ENCODE measurements at regions of chr6 and their contacts with region 1.

Region 1: DNA sequence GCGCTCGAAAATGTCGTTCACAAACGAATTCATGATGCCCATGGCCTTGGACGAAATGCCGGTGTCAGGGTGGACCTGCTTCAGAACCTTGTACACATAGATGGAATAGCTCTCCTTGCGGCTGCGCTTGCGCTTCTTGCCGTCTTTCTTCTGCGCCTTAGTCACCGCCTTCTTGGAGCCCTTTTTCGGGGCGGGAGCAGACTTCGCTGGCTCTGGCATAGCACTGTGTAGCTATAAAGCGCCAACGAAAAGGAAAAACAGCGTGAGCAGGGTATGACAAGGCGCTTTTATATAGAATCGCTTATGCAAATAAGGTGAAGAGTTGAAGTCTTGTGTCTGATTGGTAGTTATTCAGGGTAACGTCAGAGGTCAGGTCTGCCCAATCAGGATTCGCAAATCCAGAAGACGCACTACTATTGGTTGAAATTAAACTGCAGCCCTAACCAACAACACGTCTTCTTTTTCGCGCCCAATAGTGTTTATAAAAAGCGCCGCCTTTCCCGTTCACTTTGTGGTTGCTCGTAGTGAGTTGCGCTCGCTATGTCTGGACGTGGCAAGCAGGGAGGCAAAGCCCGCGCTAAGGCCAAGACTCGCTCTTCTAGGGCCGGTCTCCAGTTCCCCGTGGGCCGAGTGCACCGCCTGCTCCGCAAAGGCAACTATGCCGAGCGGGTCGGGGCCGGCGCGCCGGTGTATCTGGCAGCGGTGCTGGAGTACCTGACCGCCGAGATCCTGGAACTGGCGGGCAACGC is 114.8 kb upstream of the PRSS16 start:
- DNase-seq: peak; percentile 80 to 99 (median 87)
- ATAC-seq: peak; percentile 82
- H3K4me3 ChIP-seq: peak overlapping the region; percentile 76 to 83
- H3K4me3 Mint-ChIP-seq: no peak overlapping the region
- H3K27ac ChIP-seq: peak overlapping the region; percentile 86 to 92
- H3K27ac Mint-ChIP-seq: no peak overlapping the region
- H3K4me1 ChIP-seq: peaks cover 15% of the 10 kb centered on the region
- H3K4me1 Mint-ChIP-seq: peaks cover 21% of the 10 kb centered on the region
- H3K27me3 ChIP-seq: no peaks in the 10 kb centered on the region
- H3K27me3 Mint-ChIP-seq: no peaks in the 10 kb centered on the region
- CTCF ChIP-seq: no peak

Region 2: GRCh38 chr6:26103770-26104456 is 1028.8 kb before region 1 on chr6:
- CTCF ChIA-PET with region 1: no interaction called
- POLR2A ChIA-PET with region 1: interaction called, 3 read pairs
- intact Hi-C with region 1: loop called in 1 of 2 experiments (anchors 2 kb)
- DNase-seq: peak; percentile 84 to 97 (median 89)
- ATAC-seq: peak; percentile 91
- H3K4me3 ChIP-seq: peak overlapping the region; percentile 52 to 58
- H3K4me3 Mint-ChIP-seq: peak overlapping the region; percentile 85
- H3K27ac ChIP-seq: peak overlapping the region; percentile 85 to 92
- H3K27ac Mint-ChIP-seq: peak overlapping the region; percentile 98
- H3K4me1 ChIP-seq: peaks cover 7% of the 10 kb centered on the region
- H3K4me1 Mint-ChIP-seq: peaks cover 17% of the 10 kb centered on the region
- H3K27me3 ChIP-seq: no peaks in the 10 kb centered on the region
- H3K27me3 Mint-ChIP-seq: no peaks in the 10 kb centered on the region
- CTCF ChIP-seq: peak; percentile 67

Region 3: GRCh38 chr6:26234421-26235296 is 898.0 kb before region 1 on chr6:
- CTCF ChIA-PET with region 1: no interaction called
- POLR2A ChIA-PET with region 1: interaction called, 19 read pairs
- intact Hi-C with region 1: no loop called
- DNase-seq: peak; percentile 55 to 88 (median 66)
- ATAC-seq: peak; percentile 63
- H3K4me3 ChIP-seq: peak overlapping the region; percentile 66 to 76
- H3K4me3 Mint-ChIP-seq: peak overlapping the region; percentile 85
- H3K27ac ChIP-seq: peak overlapping the region; percentile 84 to 92
- H3K27ac Mint-ChIP-seq: peak overlapping the region; percentile 93
- H3K4me1 ChIP-seq: peaks cover 14% of the 10 kb centered on the region
- H3K4me1 Mint-ChIP-seq: peaks cover 31% of the 10 kb centered on the region
- H3K27me3 ChIP-seq: no peaks in the 10 kb centered on the region
- H3K27me3 Mint-ChIP-seq: no peaks in the 10 kb centered on the region
- CTCF ChIP-seq: no peak

Region 4: DNA sequence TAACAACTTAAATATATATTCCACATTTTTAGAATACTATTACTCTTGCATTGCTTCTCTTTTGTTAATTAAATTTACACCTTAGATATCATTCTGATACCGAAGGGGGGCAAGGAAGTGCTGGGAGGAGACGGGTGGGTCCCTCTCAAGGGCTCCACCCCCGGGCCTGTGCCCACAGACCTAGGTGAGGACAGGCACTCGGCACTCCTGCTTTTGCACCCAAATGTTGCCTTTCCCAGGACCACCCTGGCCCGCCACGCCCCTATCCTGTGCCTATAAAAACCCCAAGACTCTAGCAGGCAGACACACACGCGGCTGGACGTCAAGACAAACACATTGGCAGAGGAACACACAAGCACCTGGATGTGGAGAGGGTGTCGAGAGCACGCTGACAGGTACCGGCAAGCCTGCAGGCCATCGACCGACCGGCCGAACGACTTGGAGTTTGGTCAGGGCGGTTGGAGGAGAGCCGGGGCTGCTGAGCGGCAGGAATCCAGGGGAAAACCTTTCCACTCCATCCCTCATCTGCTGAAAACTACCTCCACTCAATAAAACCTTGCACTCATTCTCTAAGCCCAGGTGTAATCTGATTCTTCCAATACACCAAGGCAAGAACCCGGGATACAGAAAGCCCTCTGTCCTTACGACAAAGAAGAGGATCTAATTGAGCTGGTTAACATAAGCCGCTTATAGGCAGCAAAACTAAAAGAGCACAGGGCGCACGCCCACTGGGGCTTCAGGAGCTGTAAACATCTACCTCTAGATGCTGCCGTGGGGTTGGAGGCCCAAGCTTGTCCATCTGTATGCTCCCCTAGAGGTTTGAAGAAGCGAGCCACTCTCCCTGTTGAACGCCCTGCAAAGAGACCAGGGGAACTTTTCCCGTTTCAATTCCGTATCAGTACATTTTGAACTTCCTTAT is 82.6 kb before region 1 on chr6:
- CTCF ChIA-PET with region 1: no interaction called
- POLR2A ChIA-PET with region 1: no interaction called
- intact Hi-C with region 1: no loop called
- DNase-seq: no peak
- ATAC-seq: no peak
- H3K4me3 ChIP-seq: no peak overlapping the region
- H3K4me3 Mint-ChIP-seq: no peak overlapping the region
- H3K27ac ChIP-seq: no peak overlapping the region
- H3K27ac Mint-ChIP-seq: no peak overlapping the region
- H3K4me1 ChIP-seq: no peaks in the 10 kb centered on the region
- H3K4me1 Mint-ChIP-seq: no peaks in the 10 kb centered on the region
- H3K27me3 ChIP-seq: no peaks in the 10 kb centered on the region
- H3K27me3 Mint-ChIP-seq: peaks cover 23% of the 10 kb centered on the region
- CTCF ChIP-seq: no peak

Region 5: DNA sequence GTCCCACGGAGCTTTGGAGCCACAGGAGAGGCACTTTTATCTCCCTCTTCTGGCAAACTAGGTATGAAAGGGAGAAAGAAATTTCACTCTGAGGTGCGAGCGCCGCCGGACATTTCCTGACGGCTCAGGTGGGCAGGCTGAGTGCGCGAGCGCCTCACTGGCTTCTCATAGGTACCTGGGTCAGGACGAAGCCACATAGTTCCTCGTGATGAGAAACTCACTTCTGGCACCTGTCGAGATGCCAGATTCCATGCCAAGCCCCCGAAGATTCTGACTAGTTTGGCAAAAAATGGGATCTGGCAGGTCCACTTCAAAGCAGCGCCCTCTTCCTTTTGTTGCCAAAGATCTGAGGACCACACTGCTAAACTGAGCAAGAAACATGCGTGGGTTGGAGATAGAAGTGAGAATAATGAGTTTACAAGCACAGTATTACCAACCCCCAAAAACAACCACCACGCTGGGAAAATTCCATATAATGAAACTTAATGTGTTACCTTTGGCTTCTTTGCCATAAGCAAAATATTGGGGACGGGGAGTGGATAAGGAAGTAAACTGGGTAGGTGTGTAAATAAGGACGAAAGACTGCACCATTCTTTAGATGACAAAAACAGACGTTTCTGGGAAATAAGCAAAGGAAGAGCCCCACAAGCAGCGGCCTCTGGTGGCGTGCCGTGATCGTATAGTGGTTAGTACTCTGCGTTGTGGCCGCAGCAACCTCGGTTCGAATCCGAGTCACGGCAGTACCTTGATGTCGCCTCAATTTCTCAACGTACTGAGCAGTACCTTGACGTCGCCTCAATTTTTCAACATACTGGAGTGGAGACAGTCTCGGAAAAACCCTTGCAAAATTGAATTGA is 25.0 kb after region 1 on chr6:
- CTCF ChIA-PET with region 1: interaction called, 49 read pairs
- POLR2A ChIA-PET with region 1: interaction called, 32 read pairs
- intact Hi-C with region 1: loop called (anchors 1 kb)
- DNase-seq: peak; percentile 72 to 91 (median 86)
- ATAC-seq: peak; percentile 75
- H3K4me3 ChIP-seq: peak overlapping the region; percentile 55 to 60
- H3K4me3 Mint-ChIP-seq: peak overlapping the region; percentile 85
- H3K27ac ChIP-seq: peak overlapping the region; percentile 18 to 23
- H3K27ac Mint-ChIP-seq: peak overlapping the region; percentile 87
- H3K4me1 ChIP-seq: peaks cover 13% of the 10 kb centered on the region
- H3K4me1 Mint-ChIP-seq: peaks cover 38% of the 10 kb centered on the region
- H3K27me3 ChIP-seq: no peaks in the 10 kb centered on the region
- H3K27me3 Mint-ChIP-seq: no peaks in the 10 kb centered on the region
- CTCF ChIP-seq: peak; percentile 48

Region 6: GRCh38 chr6:27479319-27480182 is 346.8 kb after region 1 on chr6:
- CTCF ChIA-PET with region 1: interaction called, 4 read pairs
- POLR2A ChIA-PET with region 1: interaction called, 16 read pairs
- intact Hi-C with region 1: loop called in 1 of 2 experiments (anchors 1 kb)
- DNase-seq: peak; percentile 83 to 97 (median 87)
- ATAC-seq: peak; percentile 69
- H3K4me3 ChIP-seq: peak overlapping the region; percentile 79 to 96
- H3K4me3 Mint-ChIP-seq: no peak overlapping the region
- H3K27ac ChIP-seq: peak overlapping the region; percentile 96 to 99
- H3K27ac Mint-ChIP-seq: no peak overlapping the region
- H3K4me1 ChIP-seq: peaks cover 13% of the 10 kb centered on the region
- H3K4me1 Mint-ChIP-seq: peaks cover 9% of the 10 kb centered on the region
- H3K27me3 ChIP-seq: no peaks in the 10 kb centered on the region
- H3K27me3 Mint-ChIP-seq: no peaks in the 10 kb centered on the region
- CTCF ChIP-seq: no peak

Region 7: GRCh38 chr6:27864906-27865849 is 732.5 kb after region 1 on chr6:
- CTCF ChIA-PET with region 1: no interaction called
- POLR2A ChIA-PET with region 1: interaction called, 29 read pairs
- intact Hi-C with region 1: no loop called
- DNase-seq: peak; percentile 37 to 97 (median 56)
- ATAC-seq: peak; percentile 83
- H3K4me3 ChIP-seq: peak overlapping the region; percentile 71 to 79
- H3K4me3 Mint-ChIP-seq: peak overlapping the region; percentile 95
- H3K27ac ChIP-seq: peak overlapping the region; percentile 67 to 83
- H3K27ac Mint-ChIP-seq: peak overlapping the region; percentile 94
- H3K4me1 ChIP-seq: peaks cover 17% of the 10 kb centered on the region
- H3K4me1 Mint-ChIP-seq: peaks cover 38% of the 10 kb centered on the region
- H3K27me3 ChIP-seq: no peaks in the 10 kb centered on the region
- H3K27me3 Mint-ChIP-seq: no peaks in the 10 kb centered on the region
- CTCF ChIP-seq: no peak

Measured in CD8-positive, alpha-beta T cell (primary cell).